Dorsolateral prefrontal cortex (tissue), 120 donors: ENCODE measurements at regions of chr12 and their contacts with region 1.

Region 1: GRCh38 chr12:401235-402028 is at the start of gene CCDC77:
- DNase-seq: peak; percentile 89 to 95 (median 94)
- H3K4me3 ChIP-seq: peak within 1 kb of the TSS; percentile 46 to 90 (median 77)
- H3K27ac ChIP-seq: peak within 1 kb of the TSS in 43 of 59 donors; percentile 5 to 86 (median 58)
- H3K27me3 ChIP-seq: no peaks in the 10 kb centered on the region
- CTCF ChIP-seq: peak in 54 of 56 donors; percentile 26 to 77 (median 58)
- total RNA-seq, gene CCDC77: 5.3 to 21.3 (median 9.9) TPM

Region 2: DNA sequence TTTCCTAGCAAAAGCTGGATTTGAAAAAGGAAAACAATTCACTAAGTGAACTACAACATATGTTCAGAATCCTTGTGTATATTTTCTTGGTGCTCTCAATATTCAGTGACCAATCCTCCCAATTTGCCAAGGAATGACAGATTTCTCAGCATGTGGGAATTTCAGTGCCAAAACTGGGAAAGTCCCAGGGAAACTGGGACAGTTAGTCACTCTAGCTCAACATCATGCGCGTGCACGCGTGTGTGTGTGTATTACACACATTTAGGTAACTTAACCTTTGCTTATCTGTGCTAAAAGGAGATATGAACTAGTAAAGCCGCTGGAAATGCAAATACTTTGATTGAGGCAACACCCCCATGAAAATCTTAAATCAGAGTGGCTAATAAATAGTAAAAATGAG is 112.7 kb before region 1 on chr12:
- intact Hi-C with region 1: no loop called
- DNase-seq: peak in 1 of 10 donors; percentile 81
- H3K4me3 ChIP-seq: no peak overlapping the region
- H3K27ac ChIP-seq: peak overlapping the region in 1 of 59 donors; percentile 55
- H3K27me3 ChIP-seq: no peaks in the 10 kb centered on the region
- CTCF ChIP-seq: no peak

Region 3: GRCh38 chr12:389139-390096 is 12.0 kb before region 1 on chr12 and contains the start of gene KDM5A:
- intact Hi-C with region 1: loop called (anchors 1 kb)
- DNase-seq: peak; percentile 83 to 96 (median 91)
- H3K4me3 ChIP-seq: peak within 1 kb of the TSS; percentile 67 to 100 (median 89)
- H3K27ac ChIP-seq: peak within 1 kb of the TSS; percentile 84 to 98 (median 94)
- H3K27me3 ChIP-seq: no peaks in the 10 kb centered on the region
- CTCF ChIP-seq: peak in 34 of 56 donors; percentile 8 to 51 (median 24)
- total RNA-seq, gene KDM5A: 41.6 to 106 (median 69.8) TPM

Region 4: GRCh38 chr12:563250-563781 is 161.9 kb after region 1 on chr12:
- intact Hi-C with region 1: no loop called
- DNase-seq: no peak
- H3K4me3 ChIP-seq: peak overlapping the region in 1 of 59 donors; percentile 8
- H3K27ac ChIP-seq: peak overlapping the region in 12 of 59 donors; percentile 3 to 65 (median 24)
- H3K27me3 ChIP-seq: no peaks in the 10 kb centered on the region
- CTCF ChIP-seq: no peak